Activated B cell treated with CpG ODN at 0.5 μM for 24 hours (primary cell): ENCODE measurements at regions of chr6 and their contacts with region 1.

Region 1: GRCh38 chr6:107657755-107658461 is 166.2 kb downstream of the SCML4 start:
- DNase-seq: peak; percentile 70
- ATAC-seq: peak; percentile 89
- H3K4me3 Mint-ChIP-seq: peak overlapping the region; percentile 82
- H3K27ac Mint-ChIP-seq: peak overlapping the region; percentile 96
- H3K4me1 Mint-ChIP-seq: peaks cover 67% of the 10 kb centered on the region
- H3K27me3 Mint-ChIP-seq: no peaks in the 10 kb centered on the region
- CTCF ChIP-seq: no peak

Region 2: GRCh38 chr6:107026965-107027364 is 630.9 kb before region 1 on chr6:
- CTCF ChIA-PET with region 1: no interaction called
- POLR2A ChIA-PET with region 1: no interaction called
- intact Hi-C with region 1: loop called (anchors 5 kb)
- DNase-seq: no peak
- ATAC-seq: no peak
- H3K4me3 Mint-ChIP-seq: no peak overlapping the region
- H3K27ac Mint-ChIP-seq: no peak overlapping the region
- H3K4me1 Mint-ChIP-seq: peaks cover 23% of the 10 kb centered on the region
- H3K27me3 Mint-ChIP-seq: no peaks in the 10 kb centered on the region
- CTCF ChIP-seq: no peak

Region 3: DNA sequence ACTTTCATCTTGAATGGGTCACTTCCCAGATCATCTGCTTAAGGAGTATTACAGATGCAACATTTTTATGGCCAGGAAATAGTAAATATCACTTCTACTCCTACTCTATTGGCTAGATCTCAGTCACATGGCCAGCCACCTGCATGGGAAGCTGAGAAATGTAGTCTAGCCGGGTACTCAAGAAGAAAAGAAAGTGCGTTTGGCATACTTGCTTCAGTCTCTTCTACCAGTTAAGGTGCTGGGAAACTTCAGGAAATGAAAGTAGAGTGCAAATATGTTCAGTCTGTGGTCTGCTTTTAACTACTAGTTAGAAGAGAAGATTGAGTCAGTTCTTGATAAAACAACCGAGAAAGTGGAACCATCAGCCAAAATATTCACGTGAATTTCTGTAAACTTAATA is 327.7 kb before region 1 on chr6:
- CTCF ChIA-PET with region 1: no interaction called
- POLR2A ChIA-PET with region 1: interaction called, 3 read pairs
- intact Hi-C with region 1: loop called (anchors 5 kb)
- DNase-seq: no peak
- ATAC-seq: peak; percentile 94
- H3K4me3 Mint-ChIP-seq: peak overlapping the region; percentile 25
- H3K27ac Mint-ChIP-seq: peak overlapping the region; percentile 41
- H3K4me1 Mint-ChIP-seq: peaks cover 18% of the 10 kb centered on the region
- H3K27me3 Mint-ChIP-seq: no peaks in the 10 kb centered on the region
- CTCF ChIP-seq: no peak

Region 4: DNA sequence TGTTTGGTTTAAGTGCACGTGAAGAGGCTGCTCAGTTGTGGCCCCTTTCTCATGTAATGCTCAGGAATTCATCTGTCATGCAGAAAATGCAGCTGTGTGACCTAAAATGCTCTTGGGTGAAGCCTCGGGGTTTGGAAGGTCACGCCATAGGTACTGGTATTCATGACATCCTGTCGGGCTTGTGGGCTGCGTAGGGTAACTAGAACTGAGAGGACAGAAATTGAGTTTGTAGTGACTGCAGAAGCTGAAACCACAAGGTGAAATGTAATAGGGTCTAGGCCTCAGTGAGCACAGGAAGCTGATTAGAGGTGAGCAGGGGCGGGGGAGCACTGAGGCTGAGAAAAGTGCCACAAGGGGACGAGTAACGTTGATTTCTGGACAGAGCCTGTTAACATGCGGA is 39.2 kb before region 1 on chr6:
- CTCF ChIA-PET with region 1: interaction called, 3 read pairs
- POLR2A ChIA-PET with region 1: no interaction called
- intact Hi-C with region 1: loop called (anchors 1 kb)
- DNase-seq: no peak
- ATAC-seq: peak; percentile 94
- H3K4me3 Mint-ChIP-seq: no peak overlapping the region
- H3K27ac Mint-ChIP-seq: no peak overlapping the region
- H3K4me1 Mint-ChIP-seq: peaks cover 38% of the 10 kb centered on the region
- H3K27me3 Mint-ChIP-seq: no peaks in the 10 kb centered on the region
- CTCF ChIP-seq: no peak

Region 5: DNA sequence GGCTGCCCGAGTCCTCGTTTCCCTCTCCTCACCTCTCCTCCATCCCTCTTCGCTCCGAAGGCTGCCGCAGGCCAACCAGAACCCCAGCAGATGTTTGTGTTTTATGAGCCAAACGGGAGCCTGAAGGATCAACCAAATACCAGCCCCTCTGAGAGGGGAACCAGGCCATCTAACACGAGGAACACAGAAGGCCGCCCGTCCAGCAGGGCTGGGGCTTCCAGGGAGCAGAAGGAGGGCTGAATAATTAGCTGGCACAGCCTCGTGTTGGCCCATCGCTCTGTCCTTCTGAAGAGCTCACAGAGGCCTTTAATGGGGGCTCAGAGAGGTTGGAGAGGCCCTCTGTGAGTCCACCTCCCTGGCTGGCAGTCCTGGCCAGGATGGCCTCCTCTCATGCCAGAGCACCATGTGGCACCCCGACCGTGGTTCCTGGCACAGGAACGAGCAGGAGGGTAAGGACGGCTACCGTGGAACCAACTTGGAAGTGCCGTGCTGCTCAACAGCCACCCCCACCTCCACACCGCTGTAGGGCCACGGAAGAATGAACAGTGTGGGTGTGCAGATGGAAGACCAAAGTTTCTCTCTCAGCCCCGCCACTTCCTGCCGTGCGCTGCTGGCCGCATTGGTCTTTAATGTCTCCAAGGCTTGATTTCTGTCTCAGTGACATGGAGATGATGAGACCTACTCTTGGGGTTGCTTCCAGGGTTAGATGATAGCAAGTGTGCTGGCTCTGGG is 11.0 kb after region 1 on chr6:
- CTCF ChIA-PET with region 1: interaction called, 22 read pairs
- POLR2A ChIA-PET with region 1: interaction called, 59 read pairs
- intact Hi-C with region 1: loop called (anchors 1 kb)
- DNase-seq: peak; percentile 32
- ATAC-seq: peak; percentile 88
- H3K4me3 Mint-ChIP-seq: peak overlapping the region; percentile 32
- H3K27ac Mint-ChIP-seq: peak overlapping the region; percentile 76
- H3K4me1 Mint-ChIP-seq: peaks cover 71% of the 10 kb centered on the region
- H3K27me3 Mint-ChIP-seq: no peaks in the 10 kb centered on the region
- CTCF ChIP-seq: no peak

Region 6: DNA sequence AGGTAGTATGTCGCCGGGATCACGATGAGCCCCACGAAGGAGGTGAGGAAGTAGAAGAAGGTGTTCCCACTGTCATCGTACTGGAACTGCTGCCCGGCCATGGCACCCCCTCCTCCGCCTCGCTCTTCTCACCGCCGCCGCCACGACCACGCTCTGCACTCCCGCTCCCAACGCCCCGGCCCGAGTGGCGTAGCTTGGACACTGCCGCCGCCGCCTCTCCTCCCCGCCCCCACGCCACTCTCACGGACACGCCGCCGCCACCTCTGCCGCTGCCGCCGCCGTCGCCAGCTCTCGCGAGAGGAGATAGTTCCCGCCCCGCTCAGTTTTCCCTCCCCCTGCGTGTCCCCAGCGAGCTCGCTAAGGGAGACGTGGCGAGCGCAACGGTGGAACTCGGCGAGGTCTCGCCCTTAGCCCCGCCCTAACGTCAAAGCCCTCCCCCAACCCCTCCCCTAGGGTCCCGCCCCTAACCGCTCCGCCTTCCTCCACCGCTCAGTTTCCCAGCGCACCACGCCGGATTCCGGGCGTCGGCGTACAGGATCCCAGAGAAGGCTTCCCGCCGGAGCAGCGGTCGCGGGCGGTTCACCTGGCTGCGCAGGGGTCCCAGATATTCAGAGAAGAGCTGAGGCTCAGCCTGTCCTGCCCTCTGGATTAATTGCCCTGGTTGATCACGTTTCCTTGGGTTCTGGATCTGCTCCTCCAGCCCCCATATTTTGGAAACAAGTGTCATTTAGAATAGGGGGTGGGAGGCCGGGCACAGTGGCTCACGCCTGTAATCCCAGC is 300.2 kb after region 1 on chr6 and contains the start of gene SEC63:
- CTCF ChIA-PET with region 1: no interaction called
- POLR2A ChIA-PET with region 1: no interaction called
- intact Hi-C with region 1: loop called (anchors 5 kb)
- DNase-seq: peak; percentile 95
- ATAC-seq: peak; percentile 97
- H3K4me3 Mint-ChIP-seq: peak within 1 kb of the TSS; percentile 98
- H3K27ac Mint-ChIP-seq: peak within 1 kb of the TSS; percentile 94
- H3K4me1 Mint-ChIP-seq: peaks cover 27% of the 10 kb centered on the region
- H3K27me3 Mint-ChIP-seq: no peaks in the 10 kb centered on the region
- CTCF ChIP-seq: no peak
- total RNA-seq, gene SEC63: 64.4 and 68.3 TPM in 2 replicates